ENCODE measurements at regions of chr7 and their contacts with region 1.

Region 1: GRCh38 chr7:105487579-105488571 is 34.2 kb downstream of the PUS7 start:
- DNase-seq: peak; percentile 94
- ATAC-seq: peak; percentile 95
- H3K4me3 ChIP-seq: no peak overlapping the region
- H3K27ac ChIP-seq: peak overlapping the region; percentile 79
- H3K4me1 ChIP-seq: peaks cover 3% of the 10 kb centered on the region
- H3K27me3 ChIP-seq: no peaks in the 10 kb centered on the region
- CTCF ChIP-seq: peak; percentile 64
- POLR2A ChIP-seq: no peak
- RAD21 ChIP-seq: peak; percentile 81

Region 2: DNA sequence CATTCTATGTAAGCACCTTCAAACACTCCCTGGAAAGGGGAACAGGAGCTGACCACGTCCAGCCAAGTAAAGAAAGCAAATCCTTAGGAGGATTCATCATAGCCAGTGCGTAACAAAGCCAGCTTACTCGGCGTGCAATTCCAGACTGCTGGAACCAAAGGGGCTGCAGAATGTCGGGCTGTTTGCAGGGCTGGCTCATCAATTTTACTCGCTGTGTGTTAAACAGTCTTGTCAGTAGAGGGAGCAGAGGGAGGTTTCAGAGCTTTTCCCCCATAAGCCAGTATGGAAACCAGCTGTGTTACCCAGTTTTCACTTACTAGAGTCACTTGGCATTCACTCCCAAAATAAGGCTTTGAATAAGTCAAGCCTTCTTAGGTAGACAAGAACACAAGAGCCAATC is 346.8 kb before region 1 on chr7:
- CTCF ChIA-PET with region 1: no interaction called
- POLR2A ChIA-PET with region 1: no interaction called
- dilution Hi-C with region 1: no loop called
- in situ Hi-C with region 1: no loop called
- intact Hi-C with region 1: loop called (anchors 5 kb)
- DNase-seq: peak; percentile 54
- ATAC-seq: peak; percentile 68
- H3K4me3 ChIP-seq: no peak overlapping the region
- H3K27ac ChIP-seq: no peak overlapping the region
- H3K4me1 ChIP-seq: peaks cover 4% of the 10 kb centered on the region
- H3K27me3 ChIP-seq: no peaks in the 10 kb centered on the region
- CTCF ChIP-seq: peak; percentile 44
- POLR2A ChIP-seq: no peak
- RAD21 ChIP-seq: peak; percentile 55

Region 3: GRCh38 chr7:105399043-105399725 is 88.7 kb before region 1 on chr7:
- CTCF ChIA-PET with region 1: interaction called, 6 read pairs
- POLR2A ChIA-PET with region 1: no interaction called
- dilution Hi-C with region 1: no loop called
- in situ Hi-C with region 1: no loop called
- intact Hi-C with region 1: loop called (anchors 1 kb)
- DNase-seq: peak; percentile 52
- ATAC-seq: peak; percentile 80
- H3K4me3 ChIP-seq: no peak overlapping the region
- H3K27ac ChIP-seq: no peak overlapping the region
- H3K4me1 ChIP-seq: peaks cover 5% of the 10 kb centered on the region
- H3K27me3 ChIP-seq: no peaks in the 10 kb centered on the region
- CTCF ChIP-seq: peak; percentile 52
- POLR2A ChIP-seq: no peak
- RAD21 ChIP-seq: peak; percentile 44

Region 4: GRCh38 chr7:105512415-105512814 is 24.5 kb after region 1 on chr7:
- CTCF ChIA-PET with region 1: no interaction called
- POLR2A ChIA-PET with region 1: no interaction called
- dilution Hi-C with region 1: no loop called
- in situ Hi-C with region 1: no loop called
- intact Hi-C with region 1: no loop called
- DNase-seq: no peak
- ATAC-seq: no peak
- H3K4me3 ChIP-seq: no peak overlapping the region
- H3K27ac ChIP-seq: no peak overlapping the region
- H3K4me1 ChIP-seq: 0 out of 2 replicates have a peak, but pooled peaks cover 2% of the 10 kb centered on the region
- H3K27me3 ChIP-seq: no peaks in the 10 kb centered on the region
- CTCF ChIP-seq: no peak
- POLR2A ChIP-seq: no peak
- RAD21 ChIP-seq: no peak

Region 5: GRCh38 chr7:106001886-106002285 is 514.0 kb after region 1 on chr7:
- CTCF ChIA-PET with region 1: no interaction called
- POLR2A ChIA-PET with region 1: interaction called, 12 read pairs
- dilution Hi-C with region 1: no loop called
- in situ Hi-C with region 1: no loop called
- intact Hi-C with region 1: no loop called
- DNase-seq: no peak
- ATAC-seq: no peak
- H3K4me3 ChIP-seq: no peak overlapping the region
- H3K27ac ChIP-seq: no peak overlapping the region
- H3K4me1 ChIP-seq: no peaks in the 10 kb centered on the region
- H3K27me3 ChIP-seq: peaks cover 33% of the 10 kb centered on the region
- CTCF ChIP-seq: no peak
- POLR2A ChIP-seq: no peak
- RAD21 ChIP-seq: no peak